B cell (primary cell): ENCODE measurements at regions of chr7 and their contacts with region 1.

Region 1: DNA sequence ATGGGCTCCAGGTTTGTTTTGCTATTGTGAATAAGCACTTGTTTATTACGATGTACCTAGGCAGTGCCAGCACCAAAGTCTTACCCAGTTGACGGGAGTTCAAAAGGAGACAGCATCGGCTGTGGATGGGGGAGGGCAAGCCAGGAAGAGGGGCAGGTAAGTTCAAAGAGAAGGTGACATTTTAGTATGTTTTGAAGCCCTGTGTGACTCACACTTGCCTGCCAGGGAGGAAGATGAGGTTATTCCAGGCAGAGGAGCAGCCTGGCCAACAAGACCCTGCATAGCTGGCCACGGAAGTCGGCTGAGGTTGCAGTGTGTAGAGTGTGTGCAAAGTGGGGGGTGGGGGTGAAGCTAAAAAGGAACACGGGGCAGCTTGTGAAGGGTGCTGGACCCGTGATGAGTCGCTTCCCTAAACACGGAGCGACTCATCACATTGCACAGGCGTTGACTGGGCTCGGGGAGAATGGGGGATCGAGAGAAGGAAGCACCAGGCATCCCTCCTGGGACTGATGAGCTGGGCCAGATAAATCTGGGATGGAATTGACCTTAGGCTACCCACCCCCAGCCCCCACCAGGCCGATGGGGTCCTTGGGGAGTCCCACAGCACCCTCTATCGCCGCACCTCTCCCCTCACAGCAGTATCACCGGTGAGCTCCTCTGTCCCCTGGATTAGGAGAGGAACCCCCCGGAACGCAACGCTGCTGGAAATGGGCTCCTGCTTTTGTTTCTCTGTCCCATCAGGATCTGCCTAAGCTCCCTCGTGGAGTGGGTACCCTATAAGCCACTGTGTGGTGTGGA is 97.9 kb upstream of the IKZF1 start:
- DNase-seq: no peak
- ATAC-seq: no peak
- H3K4me3 ChIP-seq: no peak overlapping the region
- H3K4me3 Mint-ChIP-seq: no peak overlapping the region
- H3K27ac ChIP-seq: no peak overlapping the region
- H3K27ac Mint-ChIP-seq: no peak overlapping the region
- H3K4me1 ChIP-seq: peaks cover 8 to 14% of the 10 kb centered on the region in 2 donors
- H3K4me1 Mint-ChIP-seq: peaks cover 45% of the 10 kb centered on the region
- H3K27me3 ChIP-seq: no peaks in the 10 kb centered on the region
- H3K27me3 Mint-ChIP-seq: no peaks in the 10 kb centered on the region
- CTCF ChIP-seq: no peak

Region 2: GRCh38 chr7:50068961-50069551 is 137.6 kb before region 1 on chr7:
- CTCF ChIA-PET with region 1: no interaction called
- POLR2A ChIA-PET with region 1: no interaction called
- intact Hi-C with region 1: no loop called
- DNase-seq: peak; percentile 46
- ATAC-seq: peak; percentile 57
- H3K4me3 ChIP-seq: peak overlapping the region; percentile 57 to 80 (median 74)
- H3K4me3 Mint-ChIP-seq: peak overlapping the region; percentile 92
- H3K27ac ChIP-seq: peak overlapping the region; percentile 75 to 76
- H3K27ac Mint-ChIP-seq: peak overlapping the region; percentile 96
- H3K4me1 ChIP-seq: peaks cover 20% of the 10 kb centered on the region in 2 donors
- H3K4me1 Mint-ChIP-seq: peaks cover 22% of the 10 kb centered on the region
- H3K27me3 ChIP-seq: no peaks in the 10 kb centered on the region
- H3K27me3 Mint-ChIP-seq: peaks cover 8% of the 10 kb centered on the region
- CTCF ChIP-seq: no peak

Region 3: DNA sequence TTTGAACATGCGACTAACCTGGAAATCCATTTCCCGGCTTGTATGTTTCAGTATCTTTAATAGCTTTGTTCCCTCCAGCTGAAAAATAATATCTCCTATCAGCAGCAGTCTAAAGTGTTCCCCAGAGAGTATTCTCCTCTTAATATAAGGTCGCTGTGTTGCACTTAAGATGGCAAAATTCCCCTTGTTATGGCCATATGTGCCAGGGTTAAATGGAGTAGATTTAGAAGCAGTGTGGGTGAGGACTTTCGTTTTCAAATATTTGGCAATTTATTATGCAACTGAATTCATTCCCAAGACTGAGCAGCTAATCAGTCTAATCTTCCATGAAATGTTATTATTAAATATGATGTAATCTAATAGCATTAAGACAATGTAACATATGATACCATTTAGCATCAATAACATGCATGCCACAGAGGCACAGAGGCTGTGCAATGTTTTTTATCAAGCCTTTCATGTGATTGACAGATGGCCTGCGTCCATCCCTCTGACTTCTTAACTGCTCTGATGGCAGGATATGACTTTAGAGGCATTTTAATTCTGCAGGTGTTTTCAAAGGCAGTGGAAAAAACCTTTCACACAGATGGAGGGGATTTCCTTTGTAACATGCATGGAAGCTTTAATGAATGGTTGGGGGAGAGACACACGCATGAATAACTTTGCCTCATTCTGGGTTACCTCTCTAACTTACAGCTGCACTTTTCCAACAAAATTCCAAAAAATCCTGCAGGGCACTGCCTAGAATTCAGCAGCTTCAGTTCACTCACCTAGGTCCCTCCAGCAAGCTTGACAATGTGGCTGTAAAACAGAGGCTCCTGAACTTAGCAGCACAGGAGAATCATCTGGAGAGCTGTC is 58.5 kb before region 1 on chr7:
- CTCF ChIA-PET with region 1: interaction called, 33 read pairs
- POLR2A ChIA-PET with region 1: interaction called, 3 read pairs
- intact Hi-C with region 1: no loop called
- DNase-seq: peak; percentile 82
- ATAC-seq: peak; percentile 74
- H3K4me3 ChIP-seq: no peak overlapping the region
- H3K4me3 Mint-ChIP-seq: peak overlapping the region; percentile 77
- H3K27ac ChIP-seq: peak overlapping the region; percentile 77 to 89
- H3K27ac Mint-ChIP-seq: peak overlapping the region; percentile 91
- H3K4me1 ChIP-seq: peaks cover 74 to 87% of the 10 kb centered on the region in 2 donors
- H3K4me1 Mint-ChIP-seq: peaks cover 87% of the 10 kb centered on the region
- H3K27me3 ChIP-seq: no peaks in the 10 kb centered on the region
- H3K27me3 Mint-ChIP-seq: no peaks in the 10 kb centered on the region
- CTCF ChIP-seq: no peak

Region 4: DNA sequence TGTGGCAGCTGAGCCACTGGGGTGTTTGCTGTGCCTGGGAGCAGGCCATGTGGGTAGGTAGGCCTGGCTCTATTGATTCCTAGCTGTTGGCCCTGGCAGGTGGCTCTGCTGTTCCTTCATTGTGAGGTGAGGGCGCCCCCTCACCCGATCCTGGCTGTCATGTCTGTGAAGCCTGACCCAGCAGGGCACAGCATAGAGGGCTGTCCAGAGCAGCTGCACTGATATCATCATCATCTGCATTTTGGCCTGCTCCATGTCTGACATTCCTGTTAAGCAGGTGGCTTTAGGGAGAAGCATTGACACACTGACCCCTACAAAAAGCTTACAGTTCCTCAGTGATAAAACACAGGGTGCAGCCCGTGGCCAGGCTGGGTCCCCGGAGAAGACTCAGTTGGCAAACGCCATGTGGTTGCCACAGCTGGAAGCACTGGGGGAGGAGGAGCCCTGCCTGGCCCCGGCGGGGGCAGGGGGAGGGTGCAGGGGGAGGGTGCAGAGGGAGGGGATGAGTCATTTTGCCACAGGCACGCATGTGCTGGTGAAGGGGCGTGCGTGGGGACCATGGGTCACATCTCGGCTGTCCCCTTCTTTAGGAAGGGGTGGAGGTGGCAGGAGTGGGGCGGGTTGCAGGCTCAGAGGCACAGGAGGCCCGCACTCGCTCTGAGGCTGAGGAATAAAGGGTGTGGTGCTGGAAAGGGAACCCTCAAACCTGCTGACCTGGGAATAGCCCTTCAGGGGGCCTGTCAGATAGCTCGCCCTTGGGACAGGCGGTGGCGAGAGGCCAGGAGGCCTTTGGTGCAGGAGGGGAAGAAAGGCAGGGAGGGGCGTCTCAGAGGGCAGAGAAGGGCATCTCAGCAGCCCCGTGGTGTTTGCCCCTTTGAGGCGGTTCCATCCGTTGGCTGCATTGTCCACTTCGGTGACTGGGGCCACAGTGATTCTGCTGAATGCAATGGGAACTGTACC is 129.4 kb after region 1 on chr7:
- CTCF ChIA-PET with region 1: interaction called, 38 read pairs
- POLR2A ChIA-PET with region 1: interaction called, 5 read pairs
- intact Hi-C with region 1: no loop called
- DNase-seq: peak; percentile 58
- ATAC-seq: peak; percentile 63
- H3K4me3 ChIP-seq: no peak overlapping the region
- H3K4me3 Mint-ChIP-seq: no peak overlapping the region
- H3K27ac ChIP-seq: peak overlapping the region; percentile 72 to 95
- H3K27ac Mint-ChIP-seq: no peak overlapping the region
- H3K4me1 ChIP-seq: peaks cover 100% of the 10 kb centered on the region in 2 donors
- H3K4me1 Mint-ChIP-seq: peaks cover 14% of the 10 kb centered on the region
- H3K27me3 ChIP-seq: no peaks in the 10 kb centered on the region
- H3K27me3 Mint-ChIP-seq: no peaks in the 10 kb centered on the region
- CTCF ChIP-seq: no peak

Region 5: GRCh38 chr7:50389961-50390360 is 183.3 kb after region 1 on chr7:
- CTCF ChIA-PET with region 1: interaction called, 17 read pairs
- POLR2A ChIA-PET with region 1: no interaction called
- intact Hi-C with region 1: no loop called
- DNase-seq: no peak
- ATAC-seq: no peak
- H3K4me3 ChIP-seq: no peak overlapping the region
- H3K4me3 Mint-ChIP-seq: no peak overlapping the region
- H3K27ac ChIP-seq: peak overlapping the region; percentile 45 to 94
- H3K27ac Mint-ChIP-seq: peak overlapping the region; percentile 89
- H3K4me1 ChIP-seq: peaks cover 39 to 61% of the 10 kb centered on the region in 2 donors
- H3K4me1 Mint-ChIP-seq: peaks cover 61% of the 10 kb centered on the region
- H3K27me3 ChIP-seq: no peaks in the 10 kb centered on the region
- H3K27me3 Mint-ChIP-seq: no peaks in the 10 kb centered on the region
- CTCF ChIP-seq: no peak

Region 6: GRCh38 chr7:50436133-50436806 is 229.6 kb after region 1 on chr7:
- CTCF ChIA-PET with region 1: interaction called, 10 read pairs
- POLR2A ChIA-PET with region 1: no interaction called
- intact Hi-C with region 1: no loop called
- DNase-seq: no peak
- ATAC-seq: no peak
- H3K4me3 ChIP-seq: no peak overlapping the region
- H3K4me3 Mint-ChIP-seq: no peak overlapping the region
- H3K27ac ChIP-seq: no peak overlapping the region
- H3K27ac Mint-ChIP-seq: no peak overlapping the region
- H3K4me1 ChIP-seq: no peaks in the 10 kb centered on the region
- H3K4me1 Mint-ChIP-seq: no peaks in the 10 kb centered on the region
- H3K27me3 ChIP-seq: no peaks in the 10 kb centered on the region
- H3K27me3 Mint-ChIP-seq: no peaks in the 10 kb centered on the region
- CTCF ChIP-seq: no peak

Region 7: DNA sequence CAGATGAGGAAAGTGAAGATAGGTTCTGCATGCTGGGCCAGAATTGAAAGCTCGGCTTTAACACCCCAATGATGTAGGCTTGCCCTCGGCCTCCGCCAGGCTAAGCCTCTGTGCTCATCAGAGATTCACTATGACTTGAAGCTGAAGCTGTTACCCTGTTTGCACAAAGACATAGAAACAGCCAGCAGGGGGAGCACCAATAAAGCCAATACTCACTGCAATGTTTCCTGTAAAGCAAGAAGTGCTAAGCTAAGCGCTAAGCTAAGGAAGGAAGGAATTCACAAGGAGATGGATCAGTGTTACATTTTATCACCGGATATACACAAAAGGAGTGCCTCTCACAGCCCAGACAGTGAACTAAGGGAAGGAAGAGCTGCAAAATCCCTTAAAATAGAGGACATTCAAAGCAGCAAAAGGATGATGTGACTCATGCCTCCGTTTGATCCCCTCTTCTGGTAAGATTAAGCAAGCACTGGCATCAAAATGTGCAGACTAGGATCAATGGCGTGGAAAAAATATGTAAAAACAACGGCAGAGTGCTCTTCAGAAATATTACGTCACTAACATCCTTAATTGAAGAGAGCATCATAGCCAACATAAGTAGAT is 956.2 kb after region 1 on chr7:
- CTCF ChIA-PET with region 1: interaction called, 10 read pairs
- POLR2A ChIA-PET with region 1: no interaction called
- intact Hi-C with region 1: no loop called
- DNase-seq: peak; percentile 63
- ATAC-seq: no peak
- H3K4me3 ChIP-seq: no peak overlapping the region
- H3K4me3 Mint-ChIP-seq: no peak overlapping the region
- H3K27ac ChIP-seq: no peak overlapping the region
- H3K27ac Mint-ChIP-seq: no peak overlapping the region
- H3K4me1 ChIP-seq: peaks cover 0 to 8% of the 10 kb centered on the region in 2 donors
- H3K4me1 Mint-ChIP-seq: peaks cover 2% of the 10 kb centered on the region
- H3K27me3 ChIP-seq: peaks cover 0 to 4% (median 2%) of the 10 kb centered on the region in 4 experiments
- H3K27me3 Mint-ChIP-seq: peaks cover 10% of the 10 kb centered on the region
- CTCF ChIP-seq: peak; percentile 83